ENCODE measurements at regions of chr19 and their contacts with region 1.

Region 1: GRCh38 chr19:32345261-32346207 is at the start of gene ZNF507:
- DNase-seq: peak; percentile 82
- H3K4me3 Mint-ChIP-seq: peak within 1 kb of the TSS; percentile 99
- H3K27ac Mint-ChIP-seq: peak within 1 kb of the TSS; percentile 87
- H3K4me1 Mint-ChIP-seq: peaks cover 22% of the 10 kb centered on the region
- H3K27me3 Mint-ChIP-seq: no peaks in the 10 kb centered on the region
- CTCF ChIP-seq: no peak
- total RNA-seq, gene ZNF507: 22.8 and 23.4 TPM in 2 replicates

Region 2: GRCh38 chr19:32269831-32270230 is 75.7 kb before region 1 on chr19:
- CTCF ChIA-PET with region 1: no interaction called
- POLR2A ChIA-PET with region 1: no interaction called
- intact Hi-C with region 1: no loop called
- DNase-seq: no peak
- H3K4me3 Mint-ChIP-seq: no peak overlapping the region
- H3K27ac Mint-ChIP-seq: no peak overlapping the region
- H3K4me1 Mint-ChIP-seq: no peaks in the 10 kb centered on the region
- H3K27me3 Mint-ChIP-seq: no peaks in the 10 kb centered on the region
- CTCF ChIP-seq: no peak

Region 3: DNA sequence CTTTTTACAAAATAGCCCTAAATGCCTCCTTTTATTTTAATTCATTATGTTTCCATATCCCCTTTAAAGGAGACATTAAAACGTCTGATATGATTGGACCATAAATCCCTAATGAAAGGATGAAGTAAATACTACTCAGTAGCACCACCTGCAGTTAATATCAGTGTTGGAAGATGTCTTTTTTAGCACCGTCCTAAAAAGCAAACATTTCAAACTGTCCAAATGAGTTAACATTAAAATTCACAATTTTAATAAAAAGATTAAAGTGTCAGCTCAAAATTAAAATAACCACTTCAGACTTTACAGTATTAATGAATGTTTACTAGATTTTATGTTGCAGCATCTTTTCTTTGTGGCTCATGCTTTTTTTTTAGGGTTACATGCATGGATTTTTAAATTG is 12.2 kb after region 1 on chr19:
- CTCF ChIA-PET with region 1: interaction called, 32 read pairs
- POLR2A ChIA-PET with region 1: interaction called, 15 read pairs
- intact Hi-C with region 1: no loop called
- DNase-seq: no peak
- H3K4me3 Mint-ChIP-seq: no peak overlapping the region
- H3K27ac Mint-ChIP-seq: no peak overlapping the region
- H3K4me1 Mint-ChIP-seq: peaks cover 2% of the 10 kb centered on the region
- H3K27me3 Mint-ChIP-seq: no peaks in the 10 kb centered on the region
- CTCF ChIP-seq: no peak

Region 4: GRCh38 chr19:32363197-32363596 is 17.7 kb after region 1 on chr19:
- CTCF ChIA-PET with region 1: interaction called, 32 read pairs
- POLR2A ChIA-PET with region 1: interaction called, 15 read pairs
- intact Hi-C with region 1: no loop called
- DNase-seq: peak; percentile 64
- H3K4me3 Mint-ChIP-seq: no peak overlapping the region
- H3K27ac Mint-ChIP-seq: no peak overlapping the region
- H3K4me1 Mint-ChIP-seq: peaks cover 9% of the 10 kb centered on the region
- H3K27me3 Mint-ChIP-seq: no peaks in the 10 kb centered on the region
- CTCF ChIP-seq: no peak

Region 5: DNA sequence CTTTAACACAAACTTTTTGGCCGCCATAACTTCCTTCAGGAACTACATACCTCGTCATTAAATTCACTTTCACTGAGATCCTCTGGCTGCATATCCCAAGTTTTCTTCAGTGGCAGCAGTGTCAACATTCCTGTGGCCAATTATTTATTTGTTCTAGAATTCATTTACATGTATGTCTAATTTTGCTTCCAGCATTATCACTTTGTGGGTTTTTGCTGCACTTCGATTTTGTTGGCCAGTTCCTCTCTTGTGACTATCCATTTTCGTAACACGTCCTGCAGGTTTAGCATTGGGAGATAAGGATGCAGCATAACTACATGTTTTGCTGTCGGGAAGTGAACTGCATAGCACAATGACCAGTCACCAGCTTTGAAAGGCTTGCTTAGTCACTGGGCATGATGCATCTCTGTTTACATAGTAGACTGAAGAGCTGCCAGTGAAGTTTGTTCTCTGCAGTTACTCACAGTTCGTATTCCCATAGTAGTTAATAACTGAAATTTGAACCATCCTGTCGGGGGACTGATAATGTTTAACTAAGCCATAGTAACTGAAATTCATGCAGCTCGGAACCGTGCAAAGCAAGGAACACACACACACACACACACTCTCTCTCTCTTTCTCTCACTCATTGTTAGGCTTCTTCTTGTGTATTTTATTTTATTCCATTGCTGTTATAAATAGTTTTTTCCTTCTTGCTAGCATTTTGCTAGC is 28.2 kb after region 1 on chr19:
- CTCF ChIA-PET with region 1: interaction called, 4 read pairs
- POLR2A ChIA-PET with region 1: interaction called, 18 read pairs
- intact Hi-C with region 1: loop called (anchors 2 kb)
- DNase-seq: peak; percentile 97
- H3K4me3 Mint-ChIP-seq: peak overlapping the region; percentile 52
- H3K27ac Mint-ChIP-seq: peak overlapping the region; percentile 72
- H3K4me1 Mint-ChIP-seq: peaks cover 22% of the 10 kb centered on the region
- H3K27me3 Mint-ChIP-seq: no peaks in the 10 kb centered on the region
- CTCF ChIP-seq: no peak

Region 6: GRCh38 chr19:32405431-32406161 is 60.1 kb after region 1 on chr19 and contains the start of gene DPY19L3:
- CTCF ChIA-PET with region 1: interaction called, 8 read pairs
- POLR2A ChIA-PET with region 1: interaction called, 40 read pairs
- intact Hi-C with region 1: no loop called
- DNase-seq: peak; percentile 92
- H3K4me3 Mint-ChIP-seq: peak within 1 kb of the TSS; percentile 79
- H3K27ac Mint-ChIP-seq: peak within 1 kb of the TSS; percentile 93
- H3K4me1 Mint-ChIP-seq: peaks cover 20% of the 10 kb centered on the region
- H3K27me3 Mint-ChIP-seq: no peaks in the 10 kb centered on the region
- CTCF ChIP-seq: no peak
- total RNA-seq, gene DPY19L3: 37.6 and 43.8 TPM in 2 replicates

Region 7: DNA sequence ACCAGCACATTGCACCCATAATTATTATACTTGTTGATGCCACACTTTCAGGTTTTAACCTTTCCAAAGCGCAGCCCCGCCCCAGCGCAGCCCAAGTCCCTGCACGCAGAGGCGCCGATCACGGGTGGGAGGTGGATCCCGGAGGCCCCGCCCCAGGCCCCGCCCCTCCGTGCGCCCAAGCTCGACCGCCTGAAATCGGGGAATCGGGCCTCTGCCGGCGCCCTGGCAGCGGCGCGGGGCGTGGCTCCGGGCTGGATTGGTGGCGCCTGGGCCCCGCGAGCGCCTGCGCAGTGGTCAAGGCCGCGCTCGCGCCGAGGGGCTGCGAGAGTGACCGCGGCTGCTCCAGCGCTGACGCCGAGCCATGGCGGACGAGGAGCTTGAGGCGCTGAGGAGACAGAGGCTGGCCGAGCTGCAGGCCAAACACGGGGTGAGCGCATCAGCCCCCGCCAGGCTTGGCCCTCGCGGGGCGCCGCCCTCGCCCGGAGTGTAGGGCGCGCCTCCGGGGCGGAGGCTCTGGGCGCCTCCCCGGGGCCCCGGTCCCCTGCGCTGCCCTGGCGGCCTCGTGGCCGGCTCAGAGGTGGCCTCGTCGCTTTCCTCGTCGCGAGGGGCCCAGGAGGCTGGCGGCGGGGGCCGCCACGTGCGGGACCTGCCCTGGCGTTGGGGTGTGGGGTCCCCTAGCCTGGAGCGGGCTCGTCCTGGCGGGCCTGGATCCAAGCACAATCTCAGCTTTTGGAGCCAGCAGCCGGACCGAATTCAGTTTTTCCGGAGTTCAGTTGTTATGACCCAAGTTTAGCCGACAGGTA is 235.6 kb after region 1 on chr19 and contains the start of gene PDCD5:
- CTCF ChIA-PET with region 1: interaction called, 3 read pairs
- POLR2A ChIA-PET with region 1: interaction called, 23 read pairs
- intact Hi-C with region 1: no loop called
- DNase-seq: peak; percentile 95
- H3K4me3 Mint-ChIP-seq: peak within 1 kb of the TSS; percentile 90
- H3K27ac Mint-ChIP-seq: peak within 1 kb of the TSS; percentile 83
- H3K4me1 Mint-ChIP-seq: peaks cover 7% of the 10 kb centered on the region
- H3K27me3 Mint-ChIP-seq: no peaks in the 10 kb centered on the region
- CTCF ChIP-seq: no peak
- total RNA-seq, gene PDCD5: 261 and 290 TPM in 2 replicates

Measured in MCF 10A (cell line).